ENCODE measurements at regions of chr11 and their contacts with region 1.

Region 1: GRCh38 chr11:113289431-113290187 is 24.8 kb upstream of the TTC12 start:
- DNase-seq: peak; percentile 73
- ATAC-seq: peak; percentile 98
- H3K4me3 Mint-ChIP-seq: no peak overlapping the region
- H3K27ac Mint-ChIP-seq: no peak overlapping the region
- H3K4me1 Mint-ChIP-seq: no peaks in the 10 kb centered on the region
- H3K27me3 Mint-ChIP-seq: peaks cover 9% of the 10 kb centered on the region
- CTCF ChIP-seq: peak; percentile 88

Region 2: DNA sequence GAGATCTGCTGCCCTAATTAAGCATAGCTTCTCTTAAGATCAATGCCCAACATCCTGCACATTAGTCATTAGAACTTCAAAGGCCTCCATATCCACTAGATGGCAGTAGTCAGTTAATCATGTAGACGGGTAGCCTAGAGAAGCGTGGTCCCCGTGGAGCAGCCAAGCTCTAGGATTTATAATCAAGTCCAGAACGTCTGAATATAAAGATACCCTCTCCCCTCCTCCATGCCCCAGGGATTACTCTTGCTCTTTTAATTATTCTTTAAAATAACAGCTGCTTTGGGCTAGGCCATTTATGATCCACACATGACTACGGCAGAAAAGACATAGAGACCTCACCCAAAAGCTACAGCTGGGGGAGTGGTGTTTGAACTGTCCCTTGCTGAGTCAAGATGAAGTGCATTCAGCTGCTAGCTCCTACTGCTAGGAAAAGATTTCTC is 701.3 kb before region 1 on chr11:
- CTCF ChIA-PET with region 1: interaction called, 82 read pairs
- POLR2A ChIA-PET with region 1: no interaction called
- intact Hi-C with region 1: loop called (anchors 2 kb)
- DNase-seq: peak; percentile 68
- ATAC-seq: peak; percentile 91
- H3K4me3 Mint-ChIP-seq: no peak overlapping the region
- H3K27ac Mint-ChIP-seq: no peak overlapping the region
- H3K4me1 Mint-ChIP-seq: peaks cover 3% of the 10 kb centered on the region
- H3K27me3 Mint-ChIP-seq: peaks cover 6% of the 10 kb centered on the region
- CTCF ChIP-seq: peak; percentile 81

Region 3: DNA sequence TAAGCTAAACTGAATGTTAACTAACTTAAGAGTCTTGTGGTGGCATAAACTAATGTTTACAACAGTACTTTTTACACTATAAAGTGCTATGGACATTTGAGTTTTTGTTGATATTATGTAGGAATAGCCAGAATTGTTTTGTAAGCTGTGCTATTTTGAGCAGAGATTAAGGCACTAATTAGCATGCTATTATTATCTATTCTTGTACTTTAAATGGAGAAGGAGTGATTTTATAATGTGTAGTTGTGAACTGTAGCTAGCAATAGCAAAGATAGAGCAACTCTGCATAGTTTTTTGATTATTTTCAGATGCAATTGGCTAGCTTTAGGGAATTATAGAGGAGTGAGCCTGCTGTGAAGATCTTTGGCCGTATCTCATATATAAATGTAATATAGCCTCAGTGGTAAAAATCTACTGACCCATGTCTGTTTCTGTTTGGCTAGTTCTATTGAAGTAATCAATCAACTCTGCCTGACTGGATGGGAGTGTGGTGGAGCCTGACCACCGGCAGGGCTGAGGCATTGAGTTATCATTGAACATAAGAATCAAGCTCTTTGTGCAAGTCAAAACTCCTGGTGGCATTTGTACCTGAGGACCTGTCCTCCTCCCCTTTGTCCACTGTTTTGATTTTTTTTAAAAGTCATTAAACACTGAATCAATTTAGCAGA is 294.1 kb before region 1 on chr11:
- CTCF ChIA-PET with region 1: no interaction called
- POLR2A ChIA-PET with region 1: no interaction called
- intact Hi-C with region 1: no loop called
- DNase-seq: no peak
- ATAC-seq: no peak
- H3K4me3 Mint-ChIP-seq: no peak overlapping the region
- H3K27ac Mint-ChIP-seq: no peak overlapping the region
- H3K4me1 Mint-ChIP-seq: no peaks in the 10 kb centered on the region
- H3K27me3 Mint-ChIP-seq: peaks cover 3% of the 10 kb centered on the region
- CTCF ChIP-seq: no peak

Region 4: DNA sequence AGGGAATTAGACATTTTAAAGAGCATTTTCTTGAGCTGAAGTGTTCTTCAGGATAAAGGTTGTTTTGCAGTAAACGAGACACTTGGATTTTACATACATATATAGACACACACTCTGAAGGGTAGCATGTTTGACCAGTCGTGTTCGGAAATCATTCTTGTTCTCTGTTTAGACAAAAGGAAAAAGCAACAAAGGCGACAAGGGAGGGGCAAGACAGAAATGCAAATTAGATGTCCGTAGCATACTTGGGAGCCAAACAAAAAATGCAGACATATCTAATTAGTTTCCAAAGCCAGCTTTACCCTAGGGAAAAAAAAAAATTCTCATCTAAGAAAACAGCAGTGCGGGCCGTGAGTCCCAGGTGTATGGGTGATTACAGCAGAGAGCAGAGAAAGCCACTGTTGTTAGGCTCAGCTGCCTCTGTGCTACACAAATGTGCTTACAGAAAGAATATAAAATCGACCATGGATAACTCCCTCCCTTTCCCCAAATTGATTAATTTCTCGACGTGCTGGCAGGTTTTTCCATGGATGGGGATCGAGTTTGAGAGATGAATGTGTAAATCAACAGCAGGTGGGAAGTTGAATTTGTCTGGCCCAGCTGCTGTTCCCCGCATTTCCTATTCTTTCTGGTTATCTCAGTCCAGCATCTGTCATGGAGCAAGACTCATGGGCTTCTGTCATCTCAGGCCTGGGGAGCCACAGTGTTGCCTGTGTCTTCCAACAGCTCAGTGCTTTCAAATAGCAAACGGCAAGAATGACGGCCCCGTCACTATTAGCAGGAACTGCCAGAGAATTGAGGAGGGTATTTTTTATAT is 151.7 kb before region 1 on chr11:
- CTCF ChIA-PET with region 1: interaction called, 3 read pairs
- POLR2A ChIA-PET with region 1: no interaction called
- intact Hi-C with region 1: loop called (anchors 10 kb)
- DNase-seq: no peak
- ATAC-seq: no peak
- H3K4me3 Mint-ChIP-seq: no peak overlapping the region
- H3K27ac Mint-ChIP-seq: no peak overlapping the region
- H3K4me1 Mint-ChIP-seq: no peaks in the 10 kb centered on the region
- H3K27me3 Mint-ChIP-seq: peaks cover 23% of the 10 kb centered on the region
- CTCF ChIP-seq: no peak

Region 5: DNA sequence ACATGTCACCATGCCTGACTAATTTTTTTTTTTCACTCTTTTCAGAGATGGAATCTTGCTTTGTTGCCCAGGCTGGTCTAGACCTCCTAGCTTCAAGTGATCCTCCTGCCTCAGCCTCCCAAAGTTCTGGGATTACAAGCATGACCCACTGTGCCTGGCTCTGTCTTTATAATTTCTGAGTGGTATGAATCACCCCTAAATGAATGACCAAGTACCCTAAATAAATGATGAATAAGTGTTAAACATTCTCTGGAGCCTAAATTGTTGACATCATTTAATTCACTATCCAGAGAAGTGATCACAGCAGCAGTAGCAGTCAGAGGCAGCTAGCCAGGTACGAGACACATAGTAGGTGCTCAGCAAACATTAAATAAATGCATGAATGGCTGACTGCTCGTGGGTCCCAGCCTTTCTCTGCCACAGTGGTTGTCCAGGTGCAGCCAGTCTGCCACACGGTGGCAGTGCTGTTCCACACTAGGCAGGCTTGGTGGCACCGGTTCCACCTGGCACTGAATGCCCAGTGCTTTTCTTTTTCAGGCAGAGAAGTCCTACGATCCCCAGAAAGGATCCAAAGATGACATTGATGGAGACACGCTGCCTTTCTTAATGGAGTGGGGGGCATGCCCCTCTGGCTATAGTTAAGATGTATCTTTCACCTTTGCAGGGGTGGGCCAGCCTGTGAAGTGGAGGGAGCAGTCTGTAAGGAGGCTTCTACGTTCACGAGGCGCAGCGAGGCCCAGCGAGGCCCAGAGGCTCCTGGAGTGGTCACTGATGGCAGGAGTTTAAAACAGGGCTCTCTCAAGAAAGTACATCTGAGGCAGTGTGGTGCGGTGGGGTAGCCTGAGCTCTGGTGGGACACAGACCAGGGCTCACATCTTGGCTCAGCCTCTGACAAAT is 16.1 kb after region 1 on chr11:
- CTCF ChIA-PET with region 1: interaction called, 11 read pairs
- POLR2A ChIA-PET with region 1: no interaction called
- intact Hi-C with region 1: no loop called
- DNase-seq: peak; percentile 80
- ATAC-seq: peak; percentile 91
- H3K4me3 Mint-ChIP-seq: no peak overlapping the region
- H3K27ac Mint-ChIP-seq: no peak overlapping the region
- H3K4me1 Mint-ChIP-seq: no peaks in the 10 kb centered on the region
- H3K27me3 Mint-ChIP-seq: peaks cover 4% of the 10 kb centered on the region
- CTCF ChIP-seq: peak; percentile 89

Measured in activated CD8-positive, alpha-beta T cell treated with anti-CD3 and anti-CD28 coated beads for 36 hours (primary cell).